Astrocyte of the cerebellum (primary cell): ENCODE measurements at regions of chr18 and their contacts with region 1.

Region 1: GRCh38 chr18:59823596-59824195 is 76.1 kb upstream of the PMAIP1 start:
- DNase-seq: peak; percentile 72
- H3K4me3 ChIP-seq: no peak overlapping the region
- CTCF ChIP-seq: peak; percentile 88

Region 2: DNA sequence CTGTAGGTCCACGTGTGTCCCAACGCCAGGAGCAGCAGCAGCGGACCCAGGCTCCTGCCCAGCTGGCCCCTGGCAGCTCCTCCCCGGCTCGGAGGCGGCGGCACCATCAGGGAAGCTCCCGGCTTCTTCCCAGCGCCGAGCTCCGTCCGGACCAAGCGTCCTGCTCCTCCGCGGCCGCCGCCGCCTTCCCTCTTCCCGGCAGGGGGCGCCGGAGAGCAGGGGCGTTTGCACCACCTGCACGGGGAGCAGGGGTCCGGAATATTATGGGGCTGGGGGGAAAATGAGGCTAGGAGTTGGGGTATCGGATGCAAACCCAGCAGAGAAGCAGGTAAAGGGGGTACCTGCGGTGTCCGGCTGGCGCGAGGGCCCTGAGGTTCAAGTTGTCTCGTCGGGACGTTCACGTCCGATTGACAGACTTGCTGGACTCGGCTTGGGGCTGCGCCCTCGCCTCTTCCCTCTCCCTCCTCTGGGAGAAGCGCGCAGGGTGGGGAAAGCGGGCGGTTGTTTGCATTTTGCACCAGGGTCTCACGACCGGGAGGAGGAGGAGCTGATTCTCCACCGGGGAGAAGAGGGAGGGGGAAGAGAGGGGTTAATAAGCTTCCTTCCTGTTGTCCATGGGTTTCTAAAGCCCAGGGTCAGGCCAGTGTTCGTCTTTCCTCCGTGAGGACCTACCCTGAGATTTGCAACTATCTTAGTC is 126.3 kb before region 1 on chr18 and contains the start of gene CCBE1:
- in situ Hi-C with region 1: loop called (anchors 10 kb)
- DNase-seq: no peak
- H3K4me3 ChIP-seq: peak within 1 kb of the TSS; percentile 73
- CTCF ChIP-seq: peak; percentile 97

Region 3: DNA sequence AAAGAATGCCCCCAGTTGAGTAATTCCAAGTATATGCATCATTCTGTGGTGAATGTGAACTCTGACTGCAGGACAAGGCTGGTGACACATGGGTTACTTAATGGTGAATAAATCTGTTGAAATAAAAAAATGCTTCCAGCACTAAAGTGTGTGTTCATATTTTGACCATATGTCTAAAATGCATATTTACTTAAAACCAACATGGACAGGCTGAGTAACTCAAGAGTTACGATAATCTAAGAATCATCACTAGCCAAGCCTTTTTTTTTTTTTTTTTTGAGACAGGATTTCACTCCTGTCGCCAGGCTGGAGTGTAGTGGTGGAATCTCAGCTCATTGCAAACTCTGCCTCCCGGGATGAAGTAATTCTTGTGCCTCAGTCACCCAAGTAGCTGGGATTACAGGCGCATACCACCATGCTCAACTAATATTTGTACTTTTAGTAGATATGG is 79.4 kb before region 1 on chr18:
- in situ Hi-C with region 1: no loop called
- DNase-seq: peak; percentile 35
- H3K4me3 ChIP-seq: no peak overlapping the region
- CTCF ChIP-seq: no peak

Region 4: GRCh38 chr18:59783138-59783537 is 40.6 kb before region 1 on chr18:
- in situ Hi-C with region 1: loop called (anchors 5 kb)
- DNase-seq: peak; percentile 34
- H3K4me3 ChIP-seq: no peak overlapping the region
- CTCF ChIP-seq: peak; percentile 77

Region 5: GRCh38 chr18:59899298-59900221 is 75.9 kb after region 1 on chr18 and contains the start of gene PMAIP1:
- in situ Hi-C with region 1: no loop called
- DNase-seq: peak; percentile 89
- H3K4me3 ChIP-seq: peak within 1 kb of the TSS; percentile 86
- CTCF ChIP-seq: no peak